Right ventricle myocardium inferior (tissue), 1 donor: ENCODE measurements at regions of chr15 and their contacts with region 1.

Region 1: DNA sequence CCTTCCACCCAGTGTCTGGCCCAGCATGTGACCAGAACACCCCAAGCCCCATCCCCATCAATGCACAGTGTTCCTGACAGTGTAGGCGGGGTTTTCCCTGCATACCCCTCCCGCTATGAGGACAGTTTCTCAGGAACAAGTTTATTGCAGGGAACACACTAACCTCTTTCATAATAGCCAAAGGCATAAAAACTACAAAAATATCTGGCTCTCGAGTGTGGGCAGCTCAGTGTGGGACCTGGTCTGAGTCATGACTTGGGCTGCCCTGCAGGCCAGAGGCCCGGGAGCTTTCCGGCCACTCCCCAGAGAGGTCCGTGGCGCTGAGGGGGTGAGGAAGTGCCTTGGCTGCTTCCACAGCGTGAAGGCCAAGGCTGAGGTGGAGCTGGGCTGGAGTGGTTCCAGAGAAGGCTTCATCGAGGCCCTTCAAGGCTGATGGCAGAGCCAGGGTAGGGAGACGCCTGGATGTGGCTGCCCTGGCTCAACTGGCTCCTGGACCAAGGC is 5.9 kb downstream of the ISLR start:
- DNase-seq: peak; percentile 85
- ATAC-seq: peak; percentile 91

Region 2: DNA sequence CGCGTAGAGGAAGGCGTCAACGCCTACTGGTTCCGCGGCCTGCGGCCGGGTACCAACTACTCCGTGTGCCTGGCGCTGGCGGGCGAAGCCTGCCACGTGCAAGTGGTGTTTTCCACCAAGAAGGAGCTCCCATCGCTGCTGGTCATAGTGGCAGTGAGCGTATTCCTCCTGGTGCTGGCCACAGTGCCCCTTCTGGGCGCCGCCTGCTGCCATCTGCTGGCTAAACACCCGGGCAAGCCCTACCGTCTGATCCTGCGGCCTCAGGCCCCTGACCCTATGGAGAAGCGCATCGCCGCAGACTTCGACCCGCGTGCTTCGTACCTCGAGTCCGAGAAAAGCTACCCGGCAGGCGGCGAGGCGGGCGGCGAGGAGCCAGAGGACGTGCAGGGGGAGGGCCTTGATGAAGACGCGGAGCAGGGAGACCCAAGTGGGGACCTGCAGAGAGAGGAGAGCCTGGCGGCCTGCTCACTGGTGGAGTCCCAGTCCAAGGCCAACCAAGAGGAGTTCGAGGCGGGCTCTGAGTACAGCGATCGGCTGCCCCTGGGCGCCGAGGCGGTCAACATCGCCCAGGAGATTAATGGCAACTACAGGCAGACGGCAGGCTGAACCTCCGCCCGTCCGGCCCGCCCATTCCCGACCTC is 44.9 kb before region 1 on chr15:
- intact Hi-C with region 1: loop called (anchors 2 kb)
- DNase-seq: no peak
- ATAC-seq: no peak

Region 3: DNA sequence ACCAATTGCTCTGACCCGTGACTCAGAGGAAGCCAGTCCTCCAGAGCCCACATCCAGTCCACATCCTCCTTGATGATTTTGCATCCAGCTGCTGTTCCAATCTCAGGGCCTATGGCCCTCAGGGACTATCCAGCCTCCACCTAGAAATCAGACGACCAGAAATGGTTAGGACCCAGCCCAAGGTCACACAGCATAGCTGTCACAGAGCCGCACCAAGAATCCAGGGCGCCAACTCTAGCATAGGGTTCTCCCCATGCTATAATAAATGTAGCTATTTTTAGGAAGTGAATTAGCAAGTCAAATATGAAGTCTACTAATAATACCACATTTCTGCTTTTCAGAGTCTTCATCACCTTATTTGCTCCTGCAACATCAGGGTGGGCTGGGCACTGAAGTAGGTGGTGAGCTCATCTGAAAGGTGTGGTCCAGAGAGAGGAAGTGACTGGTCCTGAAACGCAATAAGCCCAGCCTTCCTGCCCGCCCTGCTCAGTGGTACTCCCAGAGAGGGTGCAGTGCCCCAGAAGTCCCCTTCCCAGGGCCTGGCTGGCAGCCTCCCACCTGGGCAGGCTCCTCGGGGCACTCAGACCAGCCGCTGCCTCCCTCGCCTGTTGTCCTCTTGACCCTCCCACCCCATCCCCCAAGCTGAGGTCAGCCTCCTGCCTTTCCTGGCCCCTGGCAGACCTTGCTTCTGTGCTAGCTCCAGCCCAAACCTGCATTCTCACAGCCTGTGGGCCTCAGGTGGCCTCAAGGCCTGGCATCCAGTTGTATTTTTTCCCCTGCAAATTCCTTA is 205.7 kb after region 1 on chr15:
- intact Hi-C with region 1: no loop called
- DNase-seq: no peak
- ATAC-seq: no peak